Activated CD8-positive, alpha-beta T cell treated with anti-CD3 and anti-CD28 coated beads for 36 hours (primary cell): ENCODE measurements at regions of chr14 and their contacts with region 1.

Region 1: DNA sequence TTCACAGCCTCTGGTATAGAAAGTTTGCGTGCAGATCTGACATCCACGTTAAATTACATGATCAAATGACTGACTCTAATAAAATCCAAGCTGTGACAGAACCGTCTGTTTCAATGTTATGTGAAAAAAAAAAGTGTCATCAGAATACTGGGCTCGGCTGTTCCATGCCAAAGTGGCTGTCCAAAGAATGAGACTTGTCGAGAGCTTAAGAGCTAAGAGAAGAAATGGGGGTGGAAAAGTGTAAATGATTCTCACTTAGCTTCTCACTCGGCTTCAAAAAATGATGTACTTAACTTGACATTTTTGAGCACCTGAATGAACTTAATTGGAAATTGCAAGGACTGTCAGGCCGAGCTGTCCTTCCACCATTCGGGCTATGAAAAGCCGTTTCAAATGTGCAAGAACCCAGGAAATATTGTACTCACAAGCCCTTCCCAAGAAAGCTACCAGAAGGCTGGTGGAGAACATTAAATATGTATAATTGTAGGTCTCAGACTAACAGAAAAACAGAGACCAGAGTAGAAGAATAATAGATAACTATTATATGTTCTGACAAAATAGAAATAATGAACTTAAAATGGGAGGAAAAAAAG is 78.0 kb downstream of the DIO3 start:
- DNase-seq: no peak
- ATAC-seq: no peak
- H3K4me3 Mint-ChIP-seq: no peak overlapping the region
- H3K27ac Mint-ChIP-seq: no peak overlapping the region
- H3K4me1 Mint-ChIP-seq: peaks cover 6% of the 10 kb centered on the region
- H3K27me3 Mint-ChIP-seq: peaks cover 27% of the 10 kb centered on the region
- CTCF ChIP-seq: no peak

Region 2: GRCh38 chr14:101628471-101628966 is 10.8 kb before region 1 on chr14:
- CTCF ChIA-PET with region 1: interaction called, 13 read pairs
- POLR2A ChIA-PET with region 1: interaction called, 5 read pairs
- intact Hi-C with region 1: no loop called
- DNase-seq: peak; percentile 79
- ATAC-seq: peak; percentile 99
- H3K4me3 Mint-ChIP-seq: no peak overlapping the region
- H3K27ac Mint-ChIP-seq: no peak overlapping the region
- H3K4me1 Mint-ChIP-seq: peaks cover 3% of the 10 kb centered on the region
- H3K27me3 Mint-ChIP-seq: no peaks in the 10 kb centered on the region
- CTCF ChIP-seq: peak; percentile 100

Region 3: GRCh38 chr14:101737414-101738339 is 98.3 kb after region 1 on chr14:
- CTCF ChIA-PET with region 1: no interaction called
- POLR2A ChIA-PET with region 1: no interaction called
- intact Hi-C with region 1: no loop called
- DNase-seq: peak; percentile 68
- ATAC-seq: peak; percentile 84
- H3K4me3 Mint-ChIP-seq: no peak overlapping the region
- H3K27ac Mint-ChIP-seq: peak overlapping the region; percentile 54
- H3K4me1 Mint-ChIP-seq: peaks cover 26% of the 10 kb centered on the region
- H3K27me3 Mint-ChIP-seq: no peaks in the 10 kb centered on the region
- CTCF ChIP-seq: no peak